ENCODE measurements at regions of chr6 and their contacts with region 1.

Region 1: GRCh38 chr6:151014404-151015100 is 149.1 kb downstream of the MTHFD1L start:
- DNase-seq: peak; percentile 82
- H3K4me3 Mint-ChIP-seq: no peak overlapping the region
- H3K27ac Mint-ChIP-seq: no peak overlapping the region
- H3K4me1 Mint-ChIP-seq: no peaks in the 10 kb centered on the region
- H3K27me3 Mint-ChIP-seq: no peaks in the 10 kb centered on the region
- CTCF ChIP-seq: peak; percentile 97

Region 2: GRCh38 chr6:151004415-151005024 is 10.0 kb before region 1 on chr6:
- CTCF ChIA-PET with region 1: interaction called, 15 read pairs
- POLR2A ChIA-PET with region 1: interaction called, 5 read pairs
- intact Hi-C with region 1: no loop called
- DNase-seq: peak; percentile 93
- H3K4me3 Mint-ChIP-seq: peak overlapping the region; percentile 54
- H3K27ac Mint-ChIP-seq: peak overlapping the region; percentile 83
- H3K4me1 Mint-ChIP-seq: peaks cover 27% of the 10 kb centered on the region
- H3K27me3 Mint-ChIP-seq: no peaks in the 10 kb centered on the region
- CTCF ChIP-seq: no peak

Region 3: DNA sequence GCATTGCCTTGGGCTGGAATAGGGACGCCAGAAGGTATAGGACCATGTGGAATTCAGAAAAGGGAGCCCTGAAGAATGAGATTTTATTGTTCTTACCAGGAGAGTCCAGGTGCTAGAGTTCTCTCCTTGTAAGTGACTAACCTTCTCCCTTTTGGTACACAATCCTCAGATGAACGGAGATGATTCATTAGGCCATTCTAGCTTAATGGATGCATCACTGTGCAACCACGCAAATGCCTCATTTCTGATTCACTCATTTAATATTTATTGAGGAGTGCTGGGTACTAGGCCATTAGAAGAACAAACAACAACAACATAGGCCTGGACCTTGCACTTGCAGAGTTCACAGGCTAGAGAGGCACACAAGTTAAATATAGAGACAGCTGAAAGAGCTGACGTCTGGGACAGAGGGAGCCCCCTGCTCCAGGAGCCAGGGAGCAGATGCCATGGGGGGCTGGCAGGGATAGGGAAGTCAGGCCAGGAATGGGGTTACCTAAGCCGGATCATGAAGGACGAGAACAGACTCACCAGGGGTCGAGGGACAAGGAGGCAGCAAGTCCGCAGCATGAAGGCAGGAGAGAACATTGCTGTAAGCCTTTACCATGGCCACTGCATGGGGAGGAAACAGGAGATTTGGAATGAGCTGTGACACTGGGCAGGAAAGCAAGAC is 45.7 kb after region 1 on chr6:
- CTCF ChIA-PET with region 1: interaction called, 16 read pairs
- POLR2A ChIA-PET with region 1: no interaction called
- intact Hi-C with region 1: no loop called
- DNase-seq: peak; percentile 89
- H3K4me3 Mint-ChIP-seq: no peak overlapping the region
- H3K27ac Mint-ChIP-seq: peak overlapping the region; percentile 97
- H3K4me1 Mint-ChIP-seq: peaks cover 25% of the 10 kb centered on the region
- H3K27me3 Mint-ChIP-seq: no peaks in the 10 kb centered on the region
- CTCF ChIP-seq: no peak

Region 4: DNA sequence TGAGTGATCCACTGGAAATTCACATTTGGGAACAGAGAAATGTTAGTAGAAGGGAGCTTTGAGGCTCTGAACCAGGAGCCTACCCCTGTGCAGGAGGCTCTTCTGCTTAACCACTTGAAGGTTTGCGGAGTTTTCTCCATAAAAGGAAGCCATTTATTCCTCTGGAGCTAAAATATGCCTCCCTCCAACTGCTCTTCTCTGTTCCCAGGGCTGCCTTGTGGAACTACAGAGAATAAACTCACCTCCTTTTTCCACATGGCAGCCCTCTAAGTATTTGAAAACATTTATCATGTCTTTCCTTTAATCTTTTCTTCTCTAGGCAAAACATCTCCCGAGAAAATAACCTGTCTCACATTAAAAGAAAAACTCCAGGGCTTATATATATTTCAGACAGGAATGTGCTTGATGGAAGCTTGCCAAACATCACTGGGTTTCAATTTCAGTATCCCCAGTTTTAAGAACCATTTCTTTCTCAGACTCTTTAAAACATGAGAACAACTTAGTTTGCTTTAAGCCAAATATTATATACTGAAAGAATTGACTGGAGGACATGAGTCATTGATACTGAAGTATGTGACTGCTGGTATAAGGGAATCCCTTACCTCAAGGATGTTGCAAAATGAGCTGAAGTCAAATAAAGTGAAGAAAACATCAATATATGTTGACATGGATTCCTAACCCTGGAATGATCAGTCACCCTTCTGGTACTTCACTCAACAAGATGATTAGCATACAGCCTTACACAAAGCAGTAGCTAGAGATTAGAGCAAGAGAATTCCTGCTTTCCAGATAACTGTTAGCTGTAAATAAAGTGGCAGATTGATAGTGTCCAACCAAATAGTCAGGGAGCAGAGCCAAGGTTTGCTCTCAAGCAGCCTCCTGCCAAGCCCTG is 302.8 kb after region 1 on chr6:
- CTCF ChIA-PET with region 1: interaction called, 293 read pairs
- POLR2A ChIA-PET with region 1: interaction called, 7 read pairs
- intact Hi-C with region 1: no loop called
- DNase-seq: peak; percentile 64
- H3K4me3 Mint-ChIP-seq: no peak overlapping the region
- H3K27ac Mint-ChIP-seq: no peak overlapping the region
- H3K4me1 Mint-ChIP-seq: peaks cover 9% of the 10 kb centered on the region
- H3K27me3 Mint-ChIP-seq: no peaks in the 10 kb centered on the region
- CTCF ChIP-seq: no peak

Region 5: GRCh38 chr6:151330134-151330696 is 315.7 kb after region 1 on chr6:
- CTCF ChIA-PET with region 1: interaction called, 293 read pairs
- POLR2A ChIA-PET with region 1: interaction called, 27 read pairs
- intact Hi-C with region 1: no loop called
- DNase-seq: no peak
- H3K4me3 Mint-ChIP-seq: no peak overlapping the region
- H3K27ac Mint-ChIP-seq: no peak overlapping the region
- H3K4me1 Mint-ChIP-seq: peaks cover under 1% of the 10 kb centered on the region
- H3K27me3 Mint-ChIP-seq: no peaks in the 10 kb centered on the region
- CTCF ChIP-seq: no peak

Measured in MCF 10A (cell line).